ENCODE measurements at regions of chr1 and their contacts with region 1.

Region 1: GRCh38 chr1:157496121-157496526 is 56.2 kb downstream of the FCRL5 start:
- DNase-seq: peak; percentile 39
- CTCF ChIP-seq: peak; percentile 81

Region 2: GRCh38 chr1:157176591-157177121 is 319.5 kb before region 1 on chr1:
- CTCF ChIA-PET with region 1: interaction called, 25 read pairs
- POLR2A ChIA-PET with region 1: no interaction called
- DNase-seq: peak; percentile 41
- CTCF ChIP-seq: no peak

Region 3: DNA sequence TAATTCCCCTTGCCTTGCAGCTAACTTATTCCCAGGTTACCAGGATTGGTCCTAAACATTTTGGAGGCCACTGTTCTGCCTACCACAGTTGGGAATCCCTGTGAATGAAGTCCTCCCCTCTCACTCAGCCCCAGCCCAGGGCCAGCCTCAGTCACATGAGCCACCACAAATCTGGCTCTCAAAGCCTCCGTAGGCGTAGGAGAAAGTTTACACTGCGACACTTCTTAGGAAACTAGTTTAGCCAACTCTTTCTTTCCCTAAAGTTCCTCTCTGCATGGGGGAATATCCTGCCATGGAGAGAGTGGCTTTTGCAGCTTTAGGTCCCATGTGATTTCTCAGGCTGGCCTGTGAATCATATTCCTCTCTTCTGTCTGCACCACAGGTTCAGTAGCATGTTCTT is 312.3 kb before region 1 on chr1:
- CTCF ChIA-PET with region 1: interaction called, 12 read pairs
- POLR2A ChIA-PET with region 1: no interaction called
- DNase-seq: no peak
- CTCF ChIP-seq: no peak

Region 4: DNA sequence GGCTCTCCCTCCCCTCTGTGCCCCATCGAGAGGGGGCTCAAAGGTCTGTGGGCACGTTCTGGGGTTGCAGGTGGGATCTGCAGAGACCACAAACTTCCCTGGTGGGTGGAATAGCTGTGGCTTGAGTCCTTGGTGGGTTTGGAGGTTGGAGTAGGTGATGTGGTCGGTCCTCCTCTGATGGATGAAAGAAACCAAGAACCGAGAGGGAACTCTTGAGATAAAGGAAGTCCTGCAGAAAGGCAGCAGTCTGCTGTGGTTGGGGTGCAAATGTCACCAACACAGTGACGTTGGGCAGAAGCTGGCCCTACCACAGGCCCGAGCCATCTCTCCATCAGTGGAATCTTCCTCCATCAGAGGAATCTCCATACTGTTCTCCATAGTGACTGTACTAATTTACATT is 115.6 kb before region 1 on chr1:
- CTCF ChIA-PET with region 1: interaction called, 10 read pairs
- POLR2A ChIA-PET with region 1: no interaction called
- DNase-seq: no peak
- CTCF ChIP-seq: no peak

Region 5: DNA sequence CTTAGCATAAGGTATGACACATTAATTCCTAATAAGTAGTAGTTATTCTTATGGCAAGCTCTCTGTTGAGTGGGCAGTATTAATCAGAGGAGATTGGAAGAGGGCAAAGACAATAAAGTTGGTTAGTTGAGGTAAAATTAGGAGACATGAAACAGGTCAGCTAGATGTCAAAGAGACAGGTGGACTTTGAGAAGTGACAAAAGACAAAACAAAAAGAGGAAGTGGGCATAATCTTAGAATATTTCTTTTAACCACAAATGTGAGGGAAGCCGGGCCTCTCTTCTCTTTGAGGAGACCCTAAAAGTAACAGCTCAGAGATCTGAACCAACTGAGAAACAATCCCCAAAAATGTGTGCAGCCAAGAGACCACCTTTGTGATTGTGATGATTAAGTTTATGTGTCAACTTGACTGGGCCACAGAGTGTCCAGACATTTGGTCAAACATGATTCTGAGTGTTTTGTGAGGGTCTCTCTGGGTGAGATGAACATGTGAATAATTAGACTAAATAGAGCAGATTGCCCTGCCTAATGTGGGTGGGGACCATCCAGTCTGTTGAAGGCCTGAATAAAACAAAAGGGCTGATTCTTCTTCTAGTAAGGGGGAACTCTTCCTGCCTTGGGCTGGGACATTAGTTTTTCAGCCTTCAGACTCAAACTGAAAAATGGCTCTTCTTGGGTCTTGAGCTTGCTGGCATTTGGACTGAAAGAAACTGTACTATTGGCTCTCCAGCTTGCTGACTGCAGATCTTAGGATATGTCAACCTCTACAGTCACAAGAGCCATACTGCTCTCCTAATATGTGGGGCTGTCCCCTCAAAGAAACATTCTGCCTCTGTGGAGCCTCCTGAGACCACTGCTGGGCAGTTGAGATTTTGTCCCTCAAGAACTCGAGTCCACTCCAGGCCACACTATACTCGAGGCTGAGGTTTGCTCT is 16.2 kb after region 1 on chr1:
- CTCF ChIA-PET with region 1: interaction called, 42 read pairs
- POLR2A ChIA-PET with region 1: no interaction called
- DNase-seq: peak; percentile 57
- CTCF ChIP-seq: no peak

Measured in GM10248 (cell line).